AG04450 (cell line): ENCODE measurements at regions of chr17 and their contacts with region 1.

Region 1: DNA sequence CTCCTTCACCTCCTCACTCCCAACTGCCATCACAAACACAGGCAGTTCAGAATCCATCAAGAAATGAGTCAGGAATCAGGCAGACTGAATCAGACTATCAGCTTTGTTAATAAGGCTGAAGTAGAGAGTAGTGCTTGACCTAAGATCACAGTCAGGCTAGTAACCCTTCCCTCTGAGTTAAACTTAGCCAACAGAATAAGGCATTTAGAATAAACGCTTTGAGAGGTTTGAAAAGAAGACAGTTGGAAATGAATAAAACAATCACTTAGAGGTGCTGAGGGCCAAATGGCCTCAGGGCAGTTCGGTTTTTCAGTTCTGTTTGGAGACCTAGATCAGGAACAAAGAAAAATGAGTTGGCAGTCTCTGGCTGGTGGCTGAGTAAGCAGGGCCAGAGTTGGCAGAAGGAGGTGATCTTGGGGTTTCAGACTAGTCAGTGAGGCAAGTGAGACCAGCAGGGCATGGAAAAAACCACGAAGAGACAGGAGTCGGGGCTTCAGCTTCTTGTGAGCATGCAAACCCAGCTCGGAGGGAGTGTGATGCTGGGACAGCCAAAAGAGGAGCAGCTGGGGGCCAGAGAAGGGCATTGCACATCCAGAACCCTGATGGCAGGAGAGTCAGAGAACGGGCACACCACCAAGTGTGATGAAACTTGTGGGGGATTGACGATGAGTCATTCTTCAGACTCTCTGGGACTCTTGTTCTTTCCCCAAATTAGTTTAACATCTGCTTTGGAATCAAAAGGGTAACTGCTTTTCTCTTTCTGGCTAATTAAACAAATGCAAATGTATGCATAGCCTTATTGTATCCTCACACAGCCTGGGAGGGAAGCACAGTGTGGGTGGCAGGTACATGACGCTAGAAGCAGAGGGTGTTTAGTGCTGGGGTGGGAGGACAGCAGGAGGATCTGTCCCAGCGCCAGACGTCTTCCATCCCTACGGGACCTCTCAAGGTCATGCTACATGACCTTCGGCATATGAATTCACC is 54.8 kb downstream of the SPECC1 start:
- DNase-seq: peak; percentile 77
- H3K4me3 ChIP-seq: no peak overlapping the region
- H3K27ac ChIP-seq: peak overlapping the region; percentile 66
- H3K27me3 ChIP-seq: no peaks in the 10 kb centered on the region
- CTCF ChIP-seq: no peak

Region 2: DNA sequence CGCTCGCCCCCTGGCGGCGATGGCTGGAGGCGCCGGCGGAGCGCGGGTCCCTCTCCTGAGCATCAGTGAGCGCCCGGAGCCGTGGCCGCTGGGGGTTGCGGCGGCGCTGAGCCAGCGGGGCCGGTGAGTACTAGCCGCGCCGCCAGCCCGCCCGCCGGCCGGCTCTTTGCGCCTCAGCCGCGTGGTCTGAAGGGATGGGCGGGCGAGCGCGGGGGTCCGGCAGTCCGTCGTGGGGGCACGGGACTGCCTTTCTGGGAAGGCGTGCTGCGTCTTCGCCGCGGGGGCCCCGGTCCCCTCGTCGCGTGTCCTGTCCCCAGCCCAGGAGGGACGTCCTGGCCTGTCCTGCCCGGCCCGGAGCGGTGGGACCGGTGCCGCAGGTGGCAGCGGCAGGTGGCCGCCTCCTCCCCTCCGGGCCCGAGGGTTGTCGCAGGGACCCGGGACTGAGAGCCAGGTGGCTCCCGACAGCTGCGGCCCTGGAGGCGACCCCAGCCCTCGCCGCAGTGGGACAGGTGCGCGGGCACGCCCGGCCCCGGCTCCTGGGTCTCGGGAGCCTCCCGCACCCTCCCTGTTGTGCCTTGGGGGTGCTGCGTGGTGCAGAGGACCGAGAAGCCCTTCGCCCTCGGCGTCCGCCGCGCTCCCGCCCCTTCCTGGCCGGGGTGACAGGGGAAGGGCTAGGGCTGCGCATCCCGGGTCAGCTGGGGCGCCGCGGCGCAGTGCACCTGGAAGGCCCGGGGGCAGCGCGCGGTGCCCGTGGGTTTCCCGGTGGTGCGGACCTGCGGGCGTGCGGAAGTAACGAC is 54.5 kb before region 1 on chr17 and contains the start of gene SPECC1:
- CTCF ChIA-PET with region 1: interaction called, 11 read pairs
- POLR2A ChIA-PET with region 1: interaction called, 3 read pairs
- DNase-seq: no peak
- H3K4me3 ChIP-seq: peak within 1 kb of the TSS; percentile 59
- H3K27ac ChIP-seq: no peak within 1 kb of the TSS
- H3K27me3 ChIP-seq: peaks cover 38% of the 10 kb centered on the region
- CTCF ChIP-seq: peak; percentile 74
- polyA plus RNA-seq, gene SPECC1: 47.2 and 56.4 TPM in 2 replicates